Activated naive CD4-positive, alpha-beta T cell treated with anti-CD3 and anti-CD28 coated beads for 36 hours (primary cell): ENCODE measurements at regions of chr3 and their contacts with region 1.

Region 1: GRCh38 chr3:112561731-112562688 is at the starts of genes ATG3 and SLC35A5:
- DNase-seq: peak; percentile 99
- H3K4me3 Mint-ChIP-seq: peak within 1 kb of the TSS; percentile 90
- H3K27ac Mint-ChIP-seq: peak within 1 kb of the TSS; percentile 98
- H3K4me1 Mint-ChIP-seq: peaks cover 29% of the 10 kb centered on the region
- H3K27me3 Mint-ChIP-seq: no peaks in the 10 kb centered on the region
- total RNA-seq, gene ATG3: 49.2 to 50.4 TPM
- total RNA-seq, gene SLC35A5: 15.7 to 16.0 TPM

Region 2: DNA sequence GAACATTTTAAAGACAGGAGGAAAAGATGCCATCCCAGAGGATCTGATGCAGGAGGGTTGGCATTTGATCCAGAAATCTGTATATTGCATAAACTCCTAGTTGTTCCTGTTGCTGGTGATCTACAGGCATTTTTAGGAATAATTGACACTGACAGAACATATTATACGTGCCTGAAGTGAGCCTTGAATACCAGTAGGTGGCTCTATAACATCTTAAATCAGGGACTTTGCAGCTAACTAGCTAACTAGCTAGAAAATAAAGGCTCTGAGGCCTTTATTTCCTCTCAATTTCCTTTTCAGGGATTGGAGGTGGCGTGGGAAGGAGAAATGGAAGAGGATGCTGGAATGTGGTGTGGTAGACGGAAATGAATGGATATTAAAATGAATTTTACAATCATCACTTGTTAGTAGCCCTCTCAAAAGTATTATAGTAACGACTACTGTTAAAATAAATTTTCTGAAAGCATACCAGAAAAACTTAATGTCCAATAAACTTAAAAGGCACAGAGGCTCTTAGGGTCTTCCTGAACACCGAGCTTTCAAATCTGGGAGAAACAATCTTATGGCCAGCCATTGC is 893.0 kb before region 1 on chr3:
- CTCF ChIA-PET with region 1: no interaction called
- intact Hi-C with region 1: loop called (anchors 5 kb)
- DNase-seq: no peak
- H3K4me3 Mint-ChIP-seq: no peak overlapping the region
- H3K27ac Mint-ChIP-seq: peak overlapping the region; percentile 76
- H3K4me1 Mint-ChIP-seq: peaks cover 87% of the 10 kb centered on the region
- H3K27me3 Mint-ChIP-seq: no peaks in the 10 kb centered on the region

Region 3: GRCh38 chr3:112327371-112327951 is 234.5 kb before region 1 on chr3:
- CTCF ChIA-PET with region 1: no interaction called
- intact Hi-C with region 1: loop called (anchors 2 kb)
- DNase-seq: peak; percentile 65
- H3K4me3 Mint-ChIP-seq: no peak overlapping the region
- H3K27ac Mint-ChIP-seq: no peak overlapping the region
- H3K4me1 Mint-ChIP-seq: peaks cover 13% of the 10 kb centered on the region
- H3K27me3 Mint-ChIP-seq: peaks cover 9% of the 10 kb centered on the region

Region 4: DNA sequence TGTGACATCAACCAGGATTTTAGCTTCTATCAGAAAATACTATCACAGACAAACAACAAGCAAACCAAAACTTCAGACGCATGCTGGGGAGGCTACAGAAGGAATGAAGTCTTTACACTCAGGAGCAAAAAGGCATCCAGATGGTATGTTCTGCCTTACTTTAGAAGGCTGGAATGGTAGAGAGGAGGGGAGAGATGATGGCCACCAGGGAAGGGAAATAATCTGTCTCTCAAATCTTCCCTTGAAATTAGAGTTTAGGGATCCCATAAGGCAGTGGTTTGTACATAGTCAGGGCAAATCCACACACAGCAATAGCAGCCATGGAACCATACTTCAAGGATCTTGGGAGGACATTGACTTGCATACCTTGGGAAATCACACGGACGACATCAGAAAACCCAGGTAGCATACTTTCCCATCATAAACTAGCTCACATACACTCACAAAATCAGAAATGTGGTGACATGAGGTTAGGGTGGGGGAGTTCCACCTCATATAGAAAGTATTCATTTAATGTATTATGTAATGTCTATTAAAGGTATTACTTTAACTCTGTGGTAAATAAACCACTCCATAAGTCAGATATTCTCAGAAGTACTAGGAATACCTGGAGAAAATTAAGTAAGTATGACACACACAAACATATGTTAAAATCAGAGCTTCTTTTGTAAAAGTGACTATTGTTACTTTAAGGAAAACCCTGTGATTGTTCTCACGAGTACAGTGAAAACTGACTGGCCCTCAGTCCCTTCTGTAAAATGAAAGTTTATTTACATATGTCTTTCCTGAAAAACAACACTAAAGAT is 72.1 kb before region 1 on chr3:
- CTCF ChIA-PET with region 1: no interaction called
- intact Hi-C with region 1: loop called (anchors 2 kb)
- DNase-seq: peak; percentile 56
- H3K4me3 Mint-ChIP-seq: peak overlapping the region; percentile 100
- H3K27ac Mint-ChIP-seq: peak overlapping the region; percentile 100
- H3K4me1 Mint-ChIP-seq: peaks cover 81% of the 10 kb centered on the region
- H3K27me3 Mint-ChIP-seq: no peaks in the 10 kb centered on the region

Region 5: GRCh38 chr3:112602217-112602838 is 40.3 kb after region 1 on chr3:
- CTCF ChIA-PET with region 1: no interaction called
- intact Hi-C with region 1: loop called (anchors 2 kb)
- DNase-seq: no peak
- H3K4me3 Mint-ChIP-seq: no peak overlapping the region
- H3K27ac Mint-ChIP-seq: no peak overlapping the region
- H3K4me1 Mint-ChIP-seq: peaks cover 19% of the 10 kb centered on the region
- H3K27me3 Mint-ChIP-seq: peaks cover 11% of the 10 kb centered on the region

Region 6: GRCh38 chr3:112990672-112991602 is 428.9 kb after region 1 on chr3 and contains the start of gene GTPBP8:
- CTCF ChIA-PET with region 1: no interaction called
- intact Hi-C with region 1: loop called (anchors 5 kb)
- DNase-seq: peak; percentile 94
- H3K4me3 Mint-ChIP-seq: peak within 1 kb of the TSS; percentile 94
- H3K27ac Mint-ChIP-seq: peak within 1 kb of the TSS; percentile 96
- H3K4me1 Mint-ChIP-seq: peaks cover 68% of the 10 kb centered on the region
- H3K27me3 Mint-ChIP-seq: no peaks in the 10 kb centered on the region
- total RNA-seq, gene GTPBP8: 62.8 to 68.9 TPM

Region 7: DNA sequence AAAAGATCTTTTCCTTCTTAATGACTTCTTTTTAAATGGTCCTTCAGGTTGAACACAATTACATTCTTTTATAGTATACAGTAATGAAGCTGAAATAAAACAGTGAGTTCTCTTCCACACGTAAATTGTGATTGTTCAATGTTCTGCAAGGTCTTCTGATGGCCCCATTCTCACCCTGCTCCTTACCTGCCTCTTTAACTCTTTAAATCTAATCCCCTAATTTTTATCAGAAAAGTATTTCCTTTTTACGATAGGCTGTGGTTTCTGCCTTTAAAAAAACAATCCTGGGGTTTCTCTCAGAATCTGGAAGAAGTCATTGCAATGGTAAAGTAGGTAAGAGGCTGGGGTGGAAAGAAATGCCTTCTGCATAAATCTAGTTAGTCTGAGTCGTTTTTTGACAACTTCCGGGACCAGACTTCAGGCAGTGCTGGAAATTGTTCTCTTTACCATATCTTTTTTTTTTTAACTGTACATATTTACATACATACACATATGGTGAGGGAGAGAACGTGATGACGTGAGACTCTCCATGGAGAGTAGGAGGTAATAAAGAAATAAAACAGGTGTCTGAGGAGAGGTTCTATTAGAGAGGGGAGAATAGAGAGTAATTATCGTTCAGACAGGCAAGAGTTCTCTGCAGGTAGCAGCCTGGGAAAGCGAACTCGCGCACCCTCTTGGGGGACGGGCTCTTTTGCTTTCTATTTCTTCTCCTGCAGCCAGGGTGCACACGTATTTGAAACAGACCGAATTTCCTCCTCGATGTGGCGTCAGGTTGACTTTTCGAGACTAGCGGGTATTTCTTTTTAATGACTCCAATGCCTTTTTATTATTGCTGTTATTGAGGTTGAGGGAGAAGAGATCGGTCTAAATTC is 970.1 kb after region 1 on chr3 and contains the start of gene SIDT1:
- CTCF ChIA-PET with region 1: no interaction called
- intact Hi-C with region 1: loop called (anchors 5 kb)
- DNase-seq: peak; percentile 82
- H3K4me3 Mint-ChIP-seq: peak within 1 kb of the TSS; percentile 97
- H3K27ac Mint-ChIP-seq: peak within 1 kb of the TSS; percentile 96
- H3K4me1 Mint-ChIP-seq: peaks cover 46% of the 10 kb centered on the region
- H3K27me3 Mint-ChIP-seq: no peaks in the 10 kb centered on the region
- total RNA-seq, gene SIDT1: 14.6 to 14.9 TPM